ENCODE measurements at regions of chr15 and their contacts with region 1.

Region 1: DNA sequence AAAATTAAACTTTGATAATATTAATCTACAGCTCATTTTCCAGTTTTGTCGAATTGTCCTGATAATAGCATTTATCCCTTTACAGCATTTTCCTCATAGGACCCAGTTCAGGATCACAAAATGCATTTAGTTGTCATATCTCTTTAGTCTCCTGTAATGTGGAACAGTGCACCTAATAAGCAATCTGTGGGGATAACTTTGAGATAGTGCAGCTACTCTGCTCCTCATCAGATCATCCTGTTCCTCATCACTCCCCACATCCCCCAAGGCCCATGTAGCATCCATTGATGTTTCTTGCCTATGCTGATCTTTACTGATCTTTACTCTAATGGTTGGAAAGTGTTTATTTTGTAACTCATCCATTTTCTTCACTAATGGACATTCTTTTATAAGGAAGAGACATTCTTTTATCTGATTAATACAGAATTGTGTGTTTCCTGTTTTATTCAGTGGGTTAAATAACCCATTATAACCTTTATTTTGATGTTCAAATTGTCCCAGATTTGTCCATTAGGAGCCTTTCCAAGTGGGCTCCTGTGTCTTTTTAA is 7.5 kb downstream of the RNF111 start:
- DNase-seq: no peak
- ATAC-seq: no peak
- H3K4me3 ChIP-seq: no peak overlapping the region
- H3K4me3 Mint-ChIP-seq: no peak overlapping the region
- H3K27ac ChIP-seq: no peak overlapping the region
- H3K27ac Mint-ChIP-seq: no peak overlapping the region
- H3K4me1 ChIP-seq: peaks cover 18% of the 10 kb centered on the region
- H3K4me1 Mint-ChIP-seq: peaks cover 54% of the 10 kb centered on the region
- H3K27me3 ChIP-seq: no peaks in the 10 kb centered on the region
- H3K27me3 Mint-ChIP-seq: no peaks in the 10 kb centered on the region
- CTCF ChIP-seq: no peak

Region 2: GRCh38 chr15:59087731-59088130 is 92.8 kb after region 1 on chr15:
- CTCF ChIA-PET with region 1: no interaction called
- POLR2A ChIA-PET with region 1: no interaction called
- intact Hi-C with region 1: loop called in 1 of 2 experiments (anchors 5 kb)
- DNase-seq: no peak
- ATAC-seq: no peak
- H3K4me3 ChIP-seq: no peak overlapping the region
- H3K4me3 Mint-ChIP-seq: no peak overlapping the region
- H3K27ac ChIP-seq: no peak overlapping the region
- H3K27ac Mint-ChIP-seq: peak overlapping the region; percentile 25
- H3K4me1 ChIP-seq: no peaks in the 10 kb centered on the region
- H3K4me1 Mint-ChIP-seq: no peaks in the 10 kb centered on the region
- H3K27me3 ChIP-seq: no peaks in the 10 kb centered on the region
- H3K27me3 Mint-ChIP-seq: no peaks in the 10 kb centered on the region
- CTCF ChIP-seq: no peak

Measured in CD4-positive, alpha-beta T cell (primary cell).